ENCODE measurements at regions of chr14 and their contacts with region 1.

Region 1: GRCh38 chr14:51651388-51652167 is at the start of gene FRMD6:
- DNase-seq: peak; percentile 82 to 89 (median 83)
- H3K4me3 ChIP-seq: peak within 1 kb of the TSS; percentile 47 to 77
- H3K4me3 Mint-ChIP-seq: peak within 1 kb of the TSS; percentile 82 to 92 (median 85)
- H3K27ac ChIP-seq: peak within 1 kb of the TSS; percentile 36
- H3K27ac Mint-ChIP-seq: peak within 1 kb of the TSS in 6 of 7 donors; percentile 66 to 84 (median 72)
- H3K4me1 ChIP-seq: peaks cover 19% of the 10 kb centered on the region
- H3K4me1 Mint-ChIP-seq: peaks cover 7 to 16% (median 11%) of the 10 kb centered on the region in 4 donors
- H3K27me3 ChIP-seq: peaks cover 14% of the 10 kb centered on the region
- H3K27me3 Mint-ChIP-seq: peaks cover 14 to 18% of the 10 kb centered on the region in 2 donors
- total RNA-seq, gene FRMD6: 0.80 to 0.81 TPM

Region 2: DNA sequence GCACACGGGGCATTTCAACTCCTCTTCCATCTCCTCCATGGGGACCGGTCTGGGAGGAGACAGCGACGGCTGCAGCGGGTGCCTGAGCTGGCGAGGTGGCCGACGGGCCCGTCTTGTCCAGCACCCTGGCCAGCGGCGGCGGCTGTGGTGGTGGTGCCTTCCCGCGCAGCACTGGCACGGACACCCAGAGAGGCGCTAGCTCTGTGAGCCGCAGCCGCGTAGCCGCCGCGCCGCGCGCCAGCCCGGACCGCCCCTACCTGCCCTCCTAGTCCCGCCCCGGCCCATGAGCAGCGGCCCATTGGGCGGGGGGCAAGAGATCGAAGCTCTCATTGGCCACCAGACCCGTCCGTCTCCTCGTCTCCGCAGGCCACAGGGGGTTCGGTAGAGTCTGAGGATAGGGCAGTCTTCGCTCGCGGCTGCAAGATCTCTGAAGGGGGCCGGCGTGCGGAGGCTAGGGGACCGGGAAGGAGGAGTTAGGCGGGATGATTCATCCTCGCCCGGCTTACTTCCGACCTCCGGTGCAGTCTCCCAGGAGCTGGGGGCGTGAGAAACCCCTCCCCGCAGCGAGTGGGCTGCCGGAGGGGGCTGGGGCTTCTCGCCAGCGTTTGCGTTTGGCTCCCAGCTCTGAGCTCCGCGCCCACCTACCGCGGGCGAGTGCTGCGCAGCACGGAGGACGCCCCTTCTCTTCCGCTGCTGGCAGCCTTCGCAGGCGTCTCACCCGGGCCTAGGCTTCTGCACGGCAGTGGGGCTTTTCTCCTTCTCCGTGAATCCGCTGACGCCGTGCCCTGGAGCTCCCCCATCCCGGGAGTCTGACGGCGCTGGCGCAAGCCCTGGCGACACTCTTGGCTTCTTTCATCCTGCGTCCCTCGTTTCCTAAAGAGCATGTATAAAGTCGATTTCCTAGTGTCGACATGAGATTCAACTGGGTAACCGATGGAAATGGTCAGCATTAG is 556.4 kb before region 1 on chr14 and contains the start of gene TRIM9:
- CTCF ChIA-PET with region 1: no interaction called
- POLR2A ChIA-PET with region 1: no interaction called
- intact Hi-C with region 1: loop called (anchors 2 kb)
- DNase-seq: peak; percentile 86 to 90 (median 86)
- H3K4me3 ChIP-seq: peak within 1 kb of the TSS; percentile 42 to 51
- H3K4me3 Mint-ChIP-seq: peak within 1 kb of the TSS; percentile 90 to 96 (median 94)
- H3K27ac ChIP-seq: peak within 1 kb of the TSS; percentile 23
- H3K27ac Mint-ChIP-seq: peak within 1 kb of the TSS in 6 of 7 donors; percentile 63 to 89 (median 82)
- H3K4me1 ChIP-seq: peaks cover 18% of the 10 kb centered on the region
- H3K4me1 Mint-ChIP-seq: peaks cover 12 to 31% (median 13%) of the 10 kb centered on the region in 4 donors
- H3K27me3 ChIP-seq: peaks cover 8% of the 10 kb centered on the region
- H3K27me3 Mint-ChIP-seq: peaks cover 5 to 20% of the 10 kb centered on the region in 2 donors
- total RNA-seq, gene TRIM9: 0.44 to 0.55 TPM

Region 3: GRCh38 chr14:51239813-51240803 is 411.5 kb before region 1 on chr14 and contains the start of gene TMX1:
- CTCF ChIA-PET with region 1: no interaction called
- POLR2A ChIA-PET with region 1: no interaction called
- intact Hi-C with region 1: loop called (anchors 1 kb)
- DNase-seq: peak; percentile 80 to 86 (median 82)
- H3K4me3 ChIP-seq: peak within 1 kb of the TSS; percentile 84 to 99
- H3K4me3 Mint-ChIP-seq: peak within 1 kb of the TSS in 1 of 8 donors; percentile 37
- H3K27ac ChIP-seq: peak within 1 kb of the TSS; percentile 65
- H3K27ac Mint-ChIP-seq: no peak within 1 kb of the TSS
- H3K4me1 ChIP-seq: peaks cover 51% of the 10 kb centered on the region
- H3K4me1 Mint-ChIP-seq: peaks cover 15 to 29% (median 21%) of the 10 kb centered on the region in 4 donors
- H3K27me3 ChIP-seq: no peaks in the 10 kb centered on the region
- H3K27me3 Mint-ChIP-seq: no peaks in the 10 kb centered on the region
- total RNA-seq, gene TMX1: 28.5 to 32.9 TPM

Region 4: GRCh38 chr14:51283402-51284085 is 368.0 kb before region 1 on chr14:
- CTCF ChIA-PET with region 1: interaction called, 4 read pairs
- POLR2A ChIA-PET with region 1: no interaction called
- intact Hi-C with region 1: loop called (anchors 5 kb)
- DNase-seq: peak in 4 of 5 donors; percentile 11 to 40 (median 30)
- H3K4me3 ChIP-seq: no peak overlapping the region
- H3K4me3 Mint-ChIP-seq: no peak overlapping the region
- H3K27ac ChIP-seq: no peak overlapping the region
- H3K27ac Mint-ChIP-seq: no peak overlapping the region
- H3K4me1 ChIP-seq: no peaks in the 10 kb centered on the region
- H3K4me1 Mint-ChIP-seq: peaks cover 0 to 6% (median 3%) of the 10 kb centered on the region in 4 donors
- H3K27me3 ChIP-seq: no peaks in the 10 kb centered on the region
- H3K27me3 Mint-ChIP-seq: no peaks in the 10 kb centered on the region

Region 5: DNA sequence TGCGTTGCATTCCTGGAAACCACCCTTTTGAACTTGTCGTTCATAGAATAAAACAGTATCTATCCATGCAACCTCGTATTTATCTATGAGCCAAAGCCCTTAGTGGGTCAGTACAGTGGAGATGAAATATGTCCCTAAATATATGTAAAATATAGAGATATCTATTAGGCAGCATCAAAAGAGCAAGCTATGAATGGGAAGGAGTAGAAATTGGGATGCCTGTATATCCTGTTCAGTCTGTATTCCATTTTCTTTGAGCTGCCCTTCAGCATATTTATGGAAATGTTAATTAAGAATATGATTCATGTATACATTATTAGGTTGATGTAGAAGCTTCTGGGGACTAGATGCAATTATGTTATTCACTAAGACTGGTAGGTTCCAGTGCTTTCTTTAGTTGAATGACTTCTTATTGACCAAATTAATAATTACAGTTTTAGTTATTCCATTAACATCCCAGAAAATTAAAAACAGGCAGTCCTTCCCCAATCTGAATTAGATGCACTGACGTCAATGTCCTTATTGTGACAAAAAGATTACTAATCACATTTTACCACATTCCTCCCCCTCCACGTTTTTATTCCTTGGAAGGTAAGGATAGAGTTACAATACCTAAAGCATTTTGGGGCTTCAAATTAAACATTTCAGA is 11.8 kb before region 1 on chr14:
- CTCF ChIA-PET with region 1: interaction called, 10 read pairs
- POLR2A ChIA-PET with region 1: no interaction called
- intact Hi-C with region 1: no loop called
- DNase-seq: no peak
- H3K4me3 ChIP-seq: no peak overlapping the region
- H3K4me3 Mint-ChIP-seq: no peak overlapping the region
- H3K27ac ChIP-seq: no peak overlapping the region
- H3K27ac Mint-ChIP-seq: no peak overlapping the region
- H3K4me1 ChIP-seq: no peaks in the 10 kb centered on the region
- H3K4me1 Mint-ChIP-seq: no peaks in the 10 kb centered on the region
- H3K27me3 ChIP-seq: no peaks in the 10 kb centered on the region
- H3K27me3 Mint-ChIP-seq: peaks cover 16 to 21% of the 10 kb centered on the region in 2 donors

Region 6: GRCh38 chr14:51989293-51990234 is 338.0 kb after region 1 on chr14 and contains the start of gene RTRAF:
- CTCF ChIA-PET with region 1: no interaction called
- POLR2A ChIA-PET with region 1: no interaction called
- intact Hi-C with region 1: loop called (anchors 5 kb)
- DNase-seq: peak; percentile 91 to 93 (median 92)
- H3K4me3 ChIP-seq: peak within 1 kb of the TSS; percentile 63 to 80
- H3K4me3 Mint-ChIP-seq: peak within 1 kb of the TSS; percentile 93 to 100 (median 98)
- H3K27ac ChIP-seq: peak within 1 kb of the TSS; percentile 87
- H3K27ac Mint-ChIP-seq: peak within 1 kb of the TSS; percentile 87 to 100 (median 98)
- H3K4me1 ChIP-seq: peaks cover 42% of the 10 kb centered on the region
- H3K4me1 Mint-ChIP-seq: peaks cover 27 to 39% (median 30%) of the 10 kb centered on the region in 4 donors
- H3K27me3 ChIP-seq: no peaks in the 10 kb centered on the region
- H3K27me3 Mint-ChIP-seq: no peaks in the 10 kb centered on the region
- total RNA-seq, gene RTRAF: 105 to 114 TPM

Region 7: GRCh38 chr14:52351233-52352060 is 699.9 kb after region 1 on chr14:
- CTCF ChIA-PET with region 1: no interaction called
- POLR2A ChIA-PET with region 1: no interaction called
- intact Hi-C with region 1: no loop called
- DNase-seq: no peak
- H3K4me3 ChIP-seq: peak overlapping the region; percentile 18 to 33
- H3K4me3 Mint-ChIP-seq: peak overlapping the region; percentile 83 to 90 (median 88)
- H3K27ac ChIP-seq: peak overlapping the region; percentile 27
- H3K27ac Mint-ChIP-seq: peak overlapping the region; percentile 90 to 95 (median 93)
- H3K4me1 ChIP-seq: peaks cover 75% of the 10 kb centered on the region
- H3K4me1 Mint-ChIP-seq: peaks cover 56 to 83% (median 68%) of the 10 kb centered on the region in 4 donors
- H3K27me3 ChIP-seq: no peaks in the 10 kb centered on the region
- H3K27me3 Mint-ChIP-seq: peaks cover 0 to 3% of the 10 kb centered on the region in 2 donors